Spleen (tissue), 13 donors: ENCODE measurements at regions of chr17 and their contacts with region 1.

Region 1: DNA sequence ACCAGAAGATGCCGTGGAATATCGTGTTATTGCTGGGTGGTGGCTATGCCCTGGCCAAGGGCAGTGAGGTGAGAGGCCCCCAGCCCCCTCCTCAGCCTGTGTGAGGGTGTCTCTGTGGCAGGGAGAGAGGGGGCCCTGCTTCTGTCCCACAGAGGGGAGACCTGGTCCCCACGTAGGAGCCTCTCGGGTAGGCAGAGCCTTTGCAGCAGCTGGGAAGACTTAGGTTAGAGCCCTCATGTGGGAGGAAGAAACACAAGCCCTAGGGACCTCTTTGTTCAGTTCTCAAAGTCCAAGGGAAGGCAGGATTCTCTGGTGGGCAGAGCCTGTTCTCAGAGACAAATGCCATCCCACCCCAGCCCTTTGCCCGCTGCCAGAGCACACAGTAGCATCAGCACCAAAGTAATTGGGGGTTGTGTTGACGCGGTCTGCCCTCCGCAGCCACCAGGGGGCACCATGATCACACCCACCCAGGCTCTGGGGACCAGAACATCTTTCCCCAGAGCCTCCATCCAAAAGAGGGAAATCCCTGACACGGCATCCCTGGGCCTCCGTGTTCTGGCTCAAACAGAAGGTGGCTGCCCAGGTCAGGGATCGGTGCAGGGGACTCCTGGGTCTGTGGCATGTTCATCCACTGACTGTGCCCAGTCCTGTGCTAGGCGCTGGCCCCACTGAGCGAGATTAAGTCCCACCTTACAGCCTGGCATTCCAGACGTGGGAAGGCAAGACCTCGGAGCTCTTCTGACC is 11.5 kb upstream of the FOXN1 start:
- DNase-seq: peak; percentile 93
- H3K4me3 ChIP-seq: no peak overlapping the region
- H3K27ac ChIP-seq: no peak overlapping the region
- H3K4me1 ChIP-seq: peaks cover 0 to 9% (median 0%) of the 10 kb centered on the region in 6 donors
- H3K27me3 ChIP-seq: peaks cover 0 to 19% (median 0%) of the 10 kb centered on the region in 7 donors
- CTCF ChIP-seq: peak; percentile 71 to 92 (median 88)
- POLR2A ChIP-seq: no peak

Region 2: GRCh38 chr17:28540231-28540630 is 45.6 kb after region 1 on chr17:
- intact Hi-C with region 1: loop called (anchors 5 kb)
- DNase-seq: no peak
- H3K4me3 ChIP-seq: no peak overlapping the region
- H3K27ac ChIP-seq: no peak overlapping the region
- H3K4me1 ChIP-seq: no peaks in the 10 kb centered on the region
- H3K27me3 ChIP-seq: no peaks in the 10 kb centered on the region
- CTCF ChIP-seq: no peak
- POLR2A ChIP-seq: no peak

Region 3: DNA sequence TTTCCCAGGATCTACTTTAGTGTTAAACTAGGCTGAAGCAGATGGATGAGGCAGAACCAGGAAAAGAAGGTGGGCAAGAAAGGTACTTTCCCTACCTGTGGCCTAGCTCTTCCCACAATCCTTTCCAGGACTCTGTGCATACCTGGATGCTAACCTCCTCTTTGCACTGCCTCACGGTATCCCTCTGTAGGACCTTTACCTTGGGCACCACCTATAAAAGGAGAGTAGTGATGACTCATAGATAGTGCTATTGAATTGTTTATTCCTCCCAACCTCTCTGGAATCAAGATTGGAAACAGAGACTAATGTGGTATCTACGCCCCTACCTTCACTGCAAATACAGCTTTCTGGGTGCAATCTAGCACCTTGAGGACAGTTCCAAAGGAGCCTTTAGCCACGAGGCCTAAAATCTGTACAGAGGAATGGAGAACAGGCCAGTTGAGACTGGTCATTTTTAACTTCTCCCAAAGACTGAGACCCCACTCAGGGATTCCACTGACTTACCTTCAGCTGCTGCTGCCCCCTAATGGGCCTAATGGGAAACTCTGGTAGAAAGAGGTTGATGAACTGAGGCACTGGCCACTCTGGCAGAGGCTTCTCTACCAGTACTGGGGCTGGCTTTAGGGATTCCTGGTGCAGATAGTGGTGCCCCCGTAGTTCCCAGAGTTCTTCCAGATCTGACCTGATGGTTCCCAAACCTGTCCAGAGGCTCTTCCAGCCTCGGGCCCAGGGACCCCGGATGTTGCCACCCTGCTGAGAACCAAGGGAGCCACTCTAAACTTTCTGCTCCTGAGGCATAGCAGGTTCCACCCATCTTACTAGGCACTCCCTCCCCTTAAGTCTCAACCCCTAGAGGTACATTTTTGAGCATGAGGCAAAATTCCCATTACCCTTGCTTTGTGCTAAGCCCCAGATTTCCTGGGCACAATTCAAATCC is 118.6 kb after region 1 on chr17:
- intact Hi-C with region 1: loop called (anchors 5 kb)
- DNase-seq: peak; percentile 43
- H3K4me3 ChIP-seq: no peak overlapping the region
- H3K27ac ChIP-seq: peak overlapping the region in 1 of 8 donors; percentile 31
- H3K4me1 ChIP-seq: peaks cover 0 to 31% (median 6%) of the 10 kb centered on the region in 6 donors
- H3K27me3 ChIP-seq: no peaks in the 10 kb centered on the region
- CTCF ChIP-seq: peak in 10 of 11 experiments; percentile 24 to 75 (median 65)
- POLR2A ChIP-seq: no peak

Region 4: DNA sequence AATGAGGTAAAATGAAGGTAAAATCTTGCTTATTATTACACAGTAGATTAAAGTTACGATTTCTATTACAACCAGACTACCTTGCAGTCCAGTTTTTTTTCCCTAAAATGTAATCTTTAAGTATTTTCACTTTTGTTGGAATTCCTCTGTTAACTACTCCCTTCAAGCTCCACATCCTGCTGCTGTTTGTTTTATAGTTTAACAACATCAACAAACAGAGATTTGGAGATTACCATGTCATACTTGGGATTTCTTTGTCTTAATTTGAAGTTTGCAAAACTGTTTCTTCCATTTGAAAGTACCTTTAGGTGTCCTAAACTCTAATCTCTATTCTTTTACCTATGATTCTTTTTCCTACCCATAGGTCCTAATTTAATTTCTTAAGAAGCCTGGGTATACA is 988.9 kb after region 1 on chr17:
- intact Hi-C with region 1: no loop called
- DNase-seq: no peak
- H3K4me3 ChIP-seq: no peak overlapping the region
- H3K27ac ChIP-seq: no peak overlapping the region
- H3K4me1 ChIP-seq: no peaks in the 10 kb centered on the region
- H3K27me3 ChIP-seq: no peaks in the 10 kb centered on the region
- CTCF ChIP-seq: no peak
- POLR2A ChIP-seq: no peak